ENCODE measurements at regions of chr11 and their contacts with region 1.

Region 1: GRCh38 chr11:73625696-73626318 is 20.6 kb upstream of the PLEKHB1 start:
- DNase-seq: peak; percentile 84
- CTCF ChIP-seq: peak; percentile 85

Region 2: GRCh38 chr11:73257342-73258103 is 368.3 kb before region 1 on chr11:
- CTCF ChIA-PET with region 1: no interaction called
- POLR2A ChIA-PET with region 1: no interaction called
- DNase-seq: no peak
- CTCF ChIP-seq: no peak

Region 3: GRCh38 chr11:73458201-73458600 is 167.6 kb before region 1 on chr11:
- CTCF ChIA-PET with region 1: no interaction called
- POLR2A ChIA-PET with region 1: no interaction called
- DNase-seq: no peak
- CTCF ChIP-seq: no peak

Region 4: DNA sequence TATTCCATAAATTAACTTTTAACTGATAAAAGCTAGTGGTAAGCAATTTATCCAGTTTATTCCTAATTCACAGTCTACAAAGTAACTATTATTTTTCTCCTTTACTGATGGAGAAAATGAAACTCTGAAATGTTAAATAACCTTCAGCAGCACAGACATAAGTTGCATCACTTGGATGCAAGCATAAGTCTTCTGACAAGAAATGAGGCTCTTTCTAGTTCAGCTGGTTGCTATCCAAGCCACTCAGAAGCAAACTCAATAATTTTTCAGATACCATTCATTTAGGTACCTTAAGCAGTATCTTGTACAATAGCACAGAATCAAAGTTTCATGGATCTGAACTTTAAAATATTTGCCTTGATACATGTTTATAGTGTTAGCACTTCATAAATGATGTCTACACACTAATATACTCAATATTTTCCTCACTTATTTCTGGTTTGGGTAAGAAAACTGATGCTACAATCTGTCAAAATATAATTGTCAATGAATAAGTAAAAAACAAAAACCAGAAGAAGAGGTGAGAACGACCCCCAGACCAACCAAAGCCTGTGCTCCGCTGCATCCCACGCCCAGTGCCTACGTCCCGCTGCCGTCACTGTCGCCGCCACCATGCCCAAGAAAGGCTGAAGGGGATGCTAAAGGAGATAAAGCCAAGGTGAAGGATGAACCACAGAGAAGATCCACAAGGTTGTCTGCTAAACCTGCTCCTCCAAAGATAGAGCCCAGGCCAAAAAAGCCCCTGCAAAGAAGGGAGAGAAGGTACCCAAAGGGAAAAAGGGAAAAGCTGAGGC is 46.0 kb before region 1 on chr11:
- CTCF ChIA-PET with region 1: interaction called, 11 read pairs
- POLR2A ChIA-PET with region 1: no interaction called
- DNase-seq: no peak
- CTCF ChIP-seq: no peak

Region 5: DNA sequence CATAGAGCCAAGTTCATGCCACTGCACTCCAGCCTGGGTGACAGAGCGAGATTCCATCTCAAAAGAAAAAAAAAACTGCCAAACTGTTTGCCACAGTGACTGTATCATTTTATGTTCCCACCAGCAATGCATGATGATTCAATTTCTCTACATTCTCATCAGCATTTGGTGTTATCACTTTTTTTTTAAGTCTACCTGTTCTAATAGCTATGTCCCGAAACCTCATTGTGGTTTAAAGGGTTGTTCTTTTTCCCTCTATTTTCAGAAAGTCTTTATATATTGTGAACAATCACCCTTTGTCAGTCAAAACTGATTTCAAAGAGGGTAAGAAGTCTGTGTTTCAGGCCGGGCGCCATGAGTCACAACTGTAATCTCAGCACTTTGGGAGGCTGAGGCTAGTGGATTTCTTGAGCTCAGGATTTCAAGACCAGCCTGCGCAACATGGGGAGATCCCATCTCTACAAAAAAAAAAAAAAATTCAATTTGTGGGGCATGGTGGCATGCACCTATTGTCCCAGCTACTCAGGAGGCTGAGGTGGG is 13.1 kb before region 1 on chr11:
- CTCF ChIA-PET with region 1: interaction called, 26 read pairs
- POLR2A ChIA-PET with region 1: no interaction called
- DNase-seq: no peak
- CTCF ChIP-seq: no peak

Region 6: GRCh38 chr11:73647459-73648100 is 21.8 kb after region 1 on chr11:
- CTCF ChIA-PET with region 1: interaction called, 48 read pairs
- POLR2A ChIA-PET with region 1: no interaction called
- DNase-seq: peak; percentile 91
- CTCF ChIP-seq: no peak